Activated CD4-positive, alpha-beta memory T cell treated with anti-CD3 and anti-CD28 coated beads for 36 hours (primary cell): ENCODE measurements at regions of chr18 and their contacts with region 1.

Region 1: DNA sequence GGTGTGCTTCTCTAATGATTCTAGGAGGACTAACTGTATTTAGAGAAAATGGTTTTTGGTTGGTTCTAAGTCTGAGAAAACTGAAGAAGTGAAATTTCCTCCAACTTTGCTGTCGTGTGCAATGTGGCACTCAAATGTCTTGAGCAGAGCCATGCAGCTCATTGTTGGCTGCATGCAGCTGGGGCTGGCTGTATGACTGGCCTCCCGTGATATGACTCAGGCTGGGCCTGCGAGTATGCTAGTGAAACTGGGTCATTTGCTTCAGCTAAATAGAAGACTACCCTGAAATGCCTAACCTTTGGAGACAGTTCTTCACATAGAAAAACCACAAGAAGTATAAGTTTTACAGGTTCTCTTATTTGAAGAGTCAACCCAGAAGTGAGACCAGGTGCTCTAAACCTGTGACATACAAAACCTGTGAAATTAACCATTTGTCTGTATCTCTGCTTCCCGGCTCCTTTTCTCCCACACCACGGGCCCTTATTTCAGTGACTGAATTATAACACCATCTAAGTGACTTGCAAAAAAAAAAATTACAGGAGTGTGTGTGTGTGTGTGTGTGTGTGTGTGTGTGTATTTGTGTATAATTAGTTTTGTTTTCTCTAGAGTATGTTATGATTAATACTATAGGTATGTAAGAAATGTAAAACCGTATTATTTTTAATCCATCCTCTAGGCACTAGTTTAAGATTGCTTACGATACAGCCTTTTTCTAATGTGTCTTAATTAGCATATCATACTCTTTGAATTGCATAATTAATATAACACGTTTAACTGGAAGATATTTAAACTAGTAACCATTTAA is 15.9 kb downstream of the POLI start:
- DNase-seq: peak; percentile 92
- H3K4me3 Mint-ChIP-seq: no peak overlapping the region
- H3K27ac Mint-ChIP-seq: peak overlapping the region; percentile 65
- H3K4me1 Mint-ChIP-seq: peaks cover 23% of the 10 kb centered on the region
- H3K27me3 Mint-ChIP-seq: no peaks in the 10 kb centered on the region

Region 2: DNA sequence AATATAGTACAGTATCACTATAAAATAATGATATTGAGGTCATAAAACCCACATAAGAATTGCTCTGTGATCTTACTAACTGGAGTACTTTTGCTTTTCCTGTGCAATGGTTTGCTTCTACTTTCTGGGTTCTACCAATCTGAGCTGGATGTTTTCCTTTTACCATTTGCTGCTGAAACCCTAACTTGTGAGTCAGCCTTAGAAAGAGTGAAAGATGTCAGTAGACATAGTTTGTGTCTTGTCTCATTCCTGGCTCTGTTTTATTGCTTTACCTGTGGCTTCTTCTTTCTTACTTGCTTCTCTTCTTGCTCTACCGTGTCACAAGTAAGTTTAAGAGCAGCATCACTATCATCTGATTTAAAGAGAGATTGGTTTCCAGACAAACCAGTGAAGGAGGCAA is 121.7 kb before region 1 on chr18:
- CTCF ChIA-PET with region 1: no interaction called
- POLR2A ChIA-PET with region 1: no interaction called
- intact Hi-C with region 1: loop called (anchors 1 kb)
- DNase-seq: no peak
- H3K4me3 Mint-ChIP-seq: no peak overlapping the region
- H3K27ac Mint-ChIP-seq: peak overlapping the region; percentile 85
- H3K4me1 Mint-ChIP-seq: peaks cover 22% of the 10 kb centered on the region
- H3K27me3 Mint-ChIP-seq: no peaks in the 10 kb centered on the region

Region 3: DNA sequence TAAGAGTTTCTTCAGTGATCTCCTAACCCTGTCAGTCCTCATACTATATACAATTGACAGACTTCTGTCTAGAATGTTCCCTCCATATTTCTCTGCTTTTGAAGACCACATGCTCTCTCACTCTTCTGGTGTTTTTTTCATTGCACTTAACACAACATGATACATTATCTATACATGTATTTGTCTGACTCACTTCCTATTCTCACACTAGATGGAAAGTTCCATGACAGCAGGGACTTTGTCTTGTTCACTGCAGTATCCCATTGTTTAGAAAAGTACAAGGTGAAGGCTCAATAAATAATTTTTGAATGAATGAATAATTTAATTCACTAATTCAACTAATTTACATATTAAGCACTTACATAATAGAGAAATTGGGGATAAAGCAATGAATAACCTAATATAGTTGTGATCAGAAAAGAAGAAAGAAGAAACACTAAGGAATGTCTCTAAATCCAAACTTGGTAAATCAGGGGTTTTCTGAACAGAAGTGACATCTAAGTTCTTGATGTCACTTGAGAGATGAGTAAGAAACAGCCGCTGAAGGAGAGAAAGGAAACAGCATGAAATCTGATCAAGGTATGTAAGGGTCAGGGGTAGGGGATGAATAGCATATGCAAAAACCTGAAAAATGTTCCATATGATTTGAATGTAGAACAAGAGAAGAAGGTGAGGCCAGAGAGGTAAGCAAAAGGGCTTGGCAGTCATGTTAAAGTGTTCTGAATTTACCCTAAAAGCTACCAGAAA is 103.2 kb before region 1 on chr18:
- CTCF ChIA-PET with region 1: no interaction called
- POLR2A ChIA-PET with region 1: interaction called, 3 read pairs
- intact Hi-C with region 1: loop called (anchors 1 kb)
- DNase-seq: no peak
- H3K4me3 Mint-ChIP-seq: no peak overlapping the region
- H3K27ac Mint-ChIP-seq: no peak overlapping the region
- H3K4me1 Mint-ChIP-seq: peaks cover 3% of the 10 kb centered on the region
- H3K27me3 Mint-ChIP-seq: no peaks in the 10 kb centered on the region

Region 4: GRCh38 chr18:54261894-54262293 is 23.3 kb before region 1 on chr18:
- CTCF ChIA-PET with region 1: interaction called, 3 read pairs
- POLR2A ChIA-PET with region 1: interaction called, 11 read pairs
- intact Hi-C with region 1: loop called (anchors 1 kb)
- DNase-seq: peak; percentile 83
- H3K4me3 Mint-ChIP-seq: no peak overlapping the region
- H3K27ac Mint-ChIP-seq: peak overlapping the region; percentile 79
- H3K4me1 Mint-ChIP-seq: peaks cover 52% of the 10 kb centered on the region
- H3K27me3 Mint-ChIP-seq: no peaks in the 10 kb centered on the region

Region 5: GRCh38 chr18:54357660-54358494 is 72.7 kb after region 1 on chr18 and contains the starts of genes C18orf54 and STARD6:
- CTCF ChIA-PET with region 1: interaction called, 9 read pairs
- POLR2A ChIA-PET with region 1: interaction called, 4 read pairs
- intact Hi-C with region 1: loop called (anchors 1 kb)
- DNase-seq: peak; percentile 93
- H3K4me3 Mint-ChIP-seq: peak within 1 kb of the TSS; percentile 95
- H3K27ac Mint-ChIP-seq: peak within 1 kb of the TSS; percentile 81
- H3K4me1 Mint-ChIP-seq: peaks cover 14% of the 10 kb centered on the region
- H3K27me3 Mint-ChIP-seq: peaks cover 3% of the 10 kb centered on the region
- total RNA-seq, gene C18orf54: 11.7 to 12.2 TPM
- total RNA-seq, gene STARD6: not detected